Activated T-helper 2 cell treated with anti-CD3 and anti-CD28 coated beads, Interferon-gamma antibody, Interleukin-2, Interleukin-4, amounts not matched to agents 10 μg/mL and 5 μg/mL and 100 μg/mL, durations not matched to agents 14 hours and 24 hours and 36 hours (primary cell): ENCODE measurements at regions of chr1 and their contacts with region 1.

Region 1: DNA sequence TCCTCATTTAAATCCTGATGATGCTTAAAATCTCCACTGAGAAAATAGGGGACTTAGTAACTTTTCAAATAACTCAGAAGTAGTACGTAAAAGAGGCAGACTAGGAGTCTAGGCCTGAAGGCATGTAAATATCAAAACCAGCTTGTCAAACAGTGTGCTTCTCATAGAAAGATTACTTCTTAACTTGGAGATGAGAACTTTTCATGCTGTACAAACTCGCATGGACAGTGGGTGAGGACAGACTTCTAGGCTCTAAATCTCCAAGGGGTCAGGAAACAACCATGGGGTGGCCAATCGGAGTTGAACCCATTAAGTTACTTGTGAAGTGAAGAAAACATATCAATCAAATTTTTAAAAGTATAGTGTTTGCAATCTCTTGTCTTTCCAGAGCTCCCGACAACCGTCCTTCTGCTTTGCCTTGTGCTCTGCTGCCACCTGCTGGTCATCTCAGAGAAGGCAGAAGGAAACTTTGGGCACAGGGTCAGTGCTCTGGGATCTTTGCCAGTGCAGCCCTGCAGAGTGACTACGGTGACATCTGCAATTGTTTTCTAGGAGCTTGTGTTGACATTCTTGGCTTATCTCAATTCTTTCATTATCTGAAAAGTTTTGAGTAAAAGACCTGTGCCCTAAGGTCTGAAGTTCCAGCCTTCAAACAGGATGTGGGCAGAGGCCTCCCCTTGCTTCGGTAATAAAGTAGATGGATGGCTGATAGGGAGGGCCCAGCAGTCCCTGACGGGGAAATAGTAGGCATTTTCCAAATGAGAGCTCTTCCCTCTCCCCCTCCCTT is 105.1 kb upstream of the PDE4B start:
- DNase-seq: peak; percentile 60
- H3K4me3 Mint-ChIP-seq: no peak overlapping the region
- H3K27ac Mint-ChIP-seq: no peak overlapping the region
- H3K4me1 Mint-ChIP-seq: peaks cover 11% of the 10 kb centered on the region
- H3K27me3 Mint-ChIP-seq: peaks cover 24% of the 10 kb centered on the region

Region 2: GRCh38 chr1:64823691-64824476 is 863.7 kb before region 1 on chr1:
- intact Hi-C with region 1: loop called (anchors 5 kb)
- DNase-seq: peak; percentile 31
- H3K4me3 Mint-ChIP-seq: no peak overlapping the region
- H3K27ac Mint-ChIP-seq: no peak overlapping the region
- H3K4me1 Mint-ChIP-seq: peaks cover 20% of the 10 kb centered on the region
- H3K27me3 Mint-ChIP-seq: peaks cover 9% of the 10 kb centered on the region

Region 3: DNA sequence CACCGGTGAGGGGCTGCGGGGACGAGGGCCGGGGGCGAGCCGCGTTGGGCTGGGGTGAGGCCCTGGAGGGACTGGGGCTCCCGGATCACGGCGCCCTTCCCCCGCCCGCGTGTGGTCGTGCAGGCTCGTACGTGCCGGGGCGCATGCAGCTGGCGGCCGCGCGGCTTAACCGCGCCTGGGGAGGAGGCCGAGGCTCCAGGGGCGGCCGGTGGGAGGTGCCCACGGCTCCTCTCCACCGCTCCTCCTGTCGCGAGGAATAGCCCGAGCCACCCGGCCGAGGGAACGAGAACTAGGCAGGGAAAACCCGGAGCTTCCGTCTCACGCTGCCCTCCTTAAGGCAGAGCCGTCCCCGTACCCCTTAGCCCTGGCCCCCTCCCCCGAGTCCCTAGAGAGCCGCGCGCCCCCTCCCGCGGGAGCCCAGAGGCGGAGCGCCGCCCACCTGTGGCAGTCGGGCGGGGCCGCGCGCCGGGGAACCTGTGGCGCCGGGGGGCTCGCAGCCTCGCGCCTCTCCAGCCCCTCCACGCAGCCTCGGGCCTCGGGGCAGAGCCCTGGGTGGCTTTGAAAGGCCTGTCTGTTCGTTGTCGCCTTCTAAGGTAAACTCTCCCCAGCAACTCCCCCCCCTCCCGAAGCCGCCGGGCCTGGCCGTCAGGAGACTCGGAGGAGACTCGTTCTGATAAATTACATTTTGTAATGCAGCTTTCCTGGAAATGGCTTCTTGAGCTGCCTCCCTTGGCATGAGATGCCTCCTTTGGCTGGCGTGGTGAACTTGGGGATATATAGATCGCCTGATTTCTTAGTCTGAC is 538.9 kb before region 1 on chr1:
- intact Hi-C with region 1: loop called (anchors 10 kb)
- DNase-seq: peak; percentile 43
- H3K4me3 Mint-ChIP-seq: peak overlapping the region; percentile 90
- H3K27ac Mint-ChIP-seq: peak overlapping the region; percentile 88
- H3K4me1 Mint-ChIP-seq: peaks cover 40% of the 10 kb centered on the region
- H3K27me3 Mint-ChIP-seq: peaks cover 14% of the 10 kb centered on the region

Region 4: DNA sequence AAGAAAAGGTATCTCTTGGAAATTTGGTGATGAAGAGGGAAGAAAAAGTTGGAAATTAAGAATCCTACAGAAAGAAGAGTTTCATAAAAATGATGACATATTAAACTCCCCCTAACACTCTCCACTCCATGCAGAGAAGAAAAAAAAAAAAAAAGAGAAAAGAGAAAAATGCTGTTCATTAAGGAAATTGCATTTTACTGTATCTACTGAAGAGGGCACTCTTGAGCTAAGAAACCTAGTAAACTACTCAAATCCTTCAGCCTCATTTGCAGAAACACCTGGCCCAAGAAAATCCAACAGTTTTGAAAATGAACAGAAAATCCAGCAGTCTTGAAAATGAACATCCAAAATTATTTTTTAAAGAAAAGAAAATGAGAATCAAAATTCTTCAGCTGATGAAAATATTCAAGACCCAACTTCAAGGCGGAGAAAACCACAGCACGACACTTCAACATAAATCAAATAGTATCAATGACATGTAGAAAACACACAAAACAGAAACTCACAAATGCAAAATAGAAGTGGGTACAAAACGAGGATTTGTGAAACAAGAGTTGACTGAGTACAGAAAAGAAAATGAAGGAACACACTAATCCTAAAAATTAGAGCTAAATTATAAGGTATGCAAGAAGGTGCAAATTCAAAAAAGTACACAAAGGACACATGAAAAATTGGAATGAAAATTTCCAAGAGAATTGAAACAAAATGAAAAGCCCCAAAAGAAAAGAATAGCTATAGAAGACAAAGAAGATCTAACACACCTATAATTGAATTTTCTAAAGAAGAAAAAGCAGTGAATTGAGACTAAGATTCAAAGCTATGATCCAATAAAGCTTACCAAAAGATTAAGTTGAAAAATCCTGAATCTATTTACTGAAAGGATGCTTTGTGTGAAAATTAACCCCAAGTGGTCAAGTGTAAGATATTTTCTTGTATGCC is 451.5 kb before region 1 on chr1:
- intact Hi-C with region 1: loop called (anchors 1 kb)
- DNase-seq: no peak
- H3K4me3 Mint-ChIP-seq: no peak overlapping the region
- H3K27ac Mint-ChIP-seq: no peak overlapping the region
- H3K4me1 Mint-ChIP-seq: peaks cover 17% of the 10 kb centered on the region
- H3K27me3 Mint-ChIP-seq: peaks cover 17% of the 10 kb centered on the region

Region 5: DNA sequence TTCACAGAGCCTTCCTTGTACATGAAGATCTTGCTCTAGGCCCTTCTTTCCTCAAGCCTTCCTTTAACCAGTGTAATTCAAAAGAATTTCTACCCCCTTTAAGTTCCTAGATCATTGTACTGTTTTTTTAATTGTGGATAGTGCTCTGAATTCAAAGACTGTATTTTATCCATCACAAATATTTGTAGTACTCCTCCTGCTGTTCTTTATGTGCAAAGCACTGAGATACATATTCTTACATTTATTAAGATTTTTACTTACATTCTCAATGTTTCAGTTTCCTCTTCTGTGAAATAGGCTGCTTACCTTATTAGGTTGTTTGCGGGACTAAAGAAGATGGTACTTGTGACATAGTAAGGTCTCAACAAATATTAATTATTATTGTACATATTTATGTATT is 63.7 kb before region 1 on chr1:
- intact Hi-C with region 1: no loop called
- DNase-seq: no peak
- H3K4me3 Mint-ChIP-seq: no peak overlapping the region
- H3K27ac Mint-ChIP-seq: no peak overlapping the region
- H3K4me1 Mint-ChIP-seq: no peaks in the 10 kb centered on the region
- H3K27me3 Mint-ChIP-seq: peaks cover 4% of the 10 kb centered on the region

Region 6: DNA sequence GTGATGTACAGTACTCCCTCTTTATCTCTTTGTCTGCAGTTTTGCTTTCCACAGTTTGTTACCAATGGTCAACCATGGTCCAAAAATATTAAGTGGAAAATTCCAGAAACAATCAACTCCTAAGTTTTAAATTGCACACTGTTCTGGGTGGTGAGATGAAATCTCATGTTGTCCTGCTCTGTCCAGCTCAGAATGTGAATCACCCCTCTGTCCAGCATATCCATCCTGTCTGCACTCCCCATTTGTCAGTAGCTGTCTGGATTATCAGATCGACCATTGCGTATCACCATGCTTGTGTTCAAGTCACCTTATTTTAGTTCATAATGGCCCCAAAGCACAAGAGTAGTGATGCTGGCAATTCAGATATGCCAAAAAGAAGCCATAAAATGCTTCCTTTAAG is 13.1 kb before region 1 on chr1:
- intact Hi-C with region 1: no loop called
- DNase-seq: no peak
- H3K4me3 Mint-ChIP-seq: no peak overlapping the region
- H3K27ac Mint-ChIP-seq: no peak overlapping the region
- H3K4me1 Mint-ChIP-seq: no peaks in the 10 kb centered on the region
- H3K27me3 Mint-ChIP-seq: peaks cover 8% of the 10 kb centered on the region